T-cell (primary cell): ENCODE measurements at regions of chr2 and their contacts with region 1.

Region 1: GRCh38 chr2:177772529-177772928 is 300.0 kb downstream of the PDE11A start:
- DNase-seq: peak in 5 of 35 experiments; percentile 5 to 44 (median 15)
- ATAC-seq: no peak
- H3K4me3 ChIP-seq: no peak overlapping the region
- H3K4me3 Mint-ChIP-seq: no peak overlapping the region
- H3K27ac ChIP-seq: no peak overlapping the region
- H3K27ac Mint-ChIP-seq: no peak overlapping the region
- H3K4me1 ChIP-seq: no peaks in the 10 kb centered on the region
- H3K4me1 Mint-ChIP-seq: peaks cover 0 to 6% (median 2%) of the 10 kb centered on the region in 3 donors
- H3K27me3 ChIP-seq: peaks cover 0 to 4% of the 10 kb centered on the region in 2 experiments
- H3K27me3 Mint-ChIP-seq: peaks cover 2 to 5% of the 10 kb centered on the region in 2 donors

Region 2: DNA sequence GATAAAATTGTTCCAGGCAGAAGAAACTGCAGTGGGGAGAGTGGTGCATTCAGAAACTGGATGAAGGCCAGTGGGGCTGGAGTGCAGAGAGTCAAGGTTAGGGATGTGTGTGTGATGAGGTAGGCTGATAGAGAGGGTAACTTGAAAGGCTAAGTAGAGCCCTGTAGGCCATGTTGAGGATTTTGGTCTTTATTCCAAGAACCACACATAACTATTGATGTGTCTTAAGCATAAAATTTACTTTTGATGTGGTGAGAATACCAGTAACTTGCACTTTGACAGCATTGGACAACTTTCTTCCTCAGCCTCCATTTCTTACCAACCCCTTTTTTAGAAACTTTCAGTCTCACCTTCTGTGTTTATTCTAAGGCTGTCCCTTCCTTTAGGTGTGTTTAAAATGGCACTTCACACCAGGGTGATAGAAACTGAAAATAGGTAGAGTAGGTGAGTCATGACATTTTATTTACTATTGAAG is 1480.7 kb before region 1 on chr2:
- CTCF ChIA-PET with region 1: interaction called in 1 of 2 experiments, 13 read pairs
- POLR2A ChIA-PET with region 1: no interaction called
- DNase-seq: no peak
- ATAC-seq: peak in 2 of 4 experiments; percentile 16 to 31
- H3K4me3 ChIP-seq: no peak overlapping the region
- H3K4me3 Mint-ChIP-seq: peak overlapping the region in 1 of 3 donors; percentile 20
- H3K27ac ChIP-seq: no peak overlapping the region
- H3K27ac Mint-ChIP-seq: no peak overlapping the region
- H3K4me1 ChIP-seq: peaks cover 0 to 10% of the 10 kb centered on the region in 2 experiments
- H3K4me1 Mint-ChIP-seq: peaks cover 42 to 48% (median 42%) of the 10 kb centered on the region in 3 donors
- H3K27me3 ChIP-seq: no peaks in the 10 kb centered on the region
- H3K27me3 Mint-ChIP-seq: no peaks in the 10 kb centered on the region